H1 (cell line): ENCODE measurements at regions of chr6 and their contacts with region 1.

Region 1: GRCh38 chr6:408599-409102 is 17.1 kb downstream of the IRF4 start:
- DNase-seq: no peak
- H3K4me3 ChIP-seq: no peak overlapping the region
- H3K27ac ChIP-seq: no peak overlapping the region
- H3K4me1 ChIP-seq: peaks cover 0 to 4% (median 0%) of the 10 kb centered on the region in 4 experiments; a peak in 1 of 7 replicates
- H3K27me3 ChIP-seq: no peaks in the 10 kb centered on the region
- CTCF ChIP-seq: peak; percentile 51 to 62 (median 53)
- EP300 ChIP-seq: no peak
- POLR2A ChIP-seq: no peak
- RAD21 ChIP-seq: peak in 1 of 2 experiments; percentile 53

Region 2: GRCh38 chr6:227074-227782 is 181.4 kb before region 1 on chr6:
- CTCF ChIA-PET with region 1: interaction called, 10 read pairs
- POLR2A ChIA-PET with region 1: no interaction called
- DNase-seq: no peak
- H3K4me3 ChIP-seq: no peak overlapping the region
- H3K27ac ChIP-seq: no peak overlapping the region
- H3K4me1 ChIP-seq: peaks cover 0 to 5% (median 3%) of the 10 kb centered on the region in 4 experiments; a peak in 5 of 7 replicates
- H3K27me3 ChIP-seq: no peaks in the 10 kb centered on the region
- CTCF ChIP-seq: no peak
- EP300 ChIP-seq: no peak
- POLR2A ChIP-seq: no peak
- RAD21 ChIP-seq: peak; percentile 21 to 44; a peak in 3 of 4 replicates

Region 3: GRCh38 chr6:391559-392440 is 16.9 kb before region 1 on chr6 and contains the start of gene IRF4:
- CTCF ChIA-PET with region 1: interaction called, 24 read pairs
- POLR2A ChIA-PET with region 1: no interaction called
- DNase-seq: peak in 1 of 2 experiments; percentile 84
- H3K4me3 ChIP-seq: peak within 1 kb of the TSS; percentile 42 to 65 (median 46)
- H3K27ac ChIP-seq: no peak within 1 kb of the TSS
- H3K4me1 ChIP-seq: peaks cover 2 to 6% (median 4%) of the 10 kb centered on the region in 4 experiments; a peak in 4 of 7 replicates
- H3K27me3 ChIP-seq: peaks cover 28 to 67% (median 58%) of the 10 kb centered on the region in 4 experiments
- CTCF ChIP-seq: no peak
- EP300 ChIP-seq: no peak
- POLR2A ChIP-seq: peak in 1 of 2 experiments; percentile 43; a peak in 1 of 3 replicates
- RAD21 ChIP-seq: 0 out of 4 replicates have a peak, but pooled peaks of 1 of the 2 experiments have one; percentile 0
- total RNA-seq, gene IRF4: 2.1 and 4.2 TPM in 2 replicates

Region 4: GRCh38 chr6:398558-399078 is 10.0 kb before region 1 on chr6:
- CTCF ChIA-PET with region 1: interaction called, 24 read pairs
- POLR2A ChIA-PET with region 1: no interaction called
- DNase-seq: no peak
- H3K4me3 ChIP-seq: no peak overlapping the region
- H3K27ac ChIP-seq: no peak overlapping the region
- H3K4me1 ChIP-seq: peaks cover 0 to 6% (median 2%) of the 10 kb centered on the region in 4 experiments; a peak in 2 of 7 replicates
- H3K27me3 ChIP-seq: peaks cover 13 to 22% (median 16%) of the 10 kb centered on the region in 4 experiments
- CTCF ChIP-seq: no peak
- EP300 ChIP-seq: no peak
- POLR2A ChIP-seq: no peak
- RAD21 ChIP-seq: no peak

Region 5: DNA sequence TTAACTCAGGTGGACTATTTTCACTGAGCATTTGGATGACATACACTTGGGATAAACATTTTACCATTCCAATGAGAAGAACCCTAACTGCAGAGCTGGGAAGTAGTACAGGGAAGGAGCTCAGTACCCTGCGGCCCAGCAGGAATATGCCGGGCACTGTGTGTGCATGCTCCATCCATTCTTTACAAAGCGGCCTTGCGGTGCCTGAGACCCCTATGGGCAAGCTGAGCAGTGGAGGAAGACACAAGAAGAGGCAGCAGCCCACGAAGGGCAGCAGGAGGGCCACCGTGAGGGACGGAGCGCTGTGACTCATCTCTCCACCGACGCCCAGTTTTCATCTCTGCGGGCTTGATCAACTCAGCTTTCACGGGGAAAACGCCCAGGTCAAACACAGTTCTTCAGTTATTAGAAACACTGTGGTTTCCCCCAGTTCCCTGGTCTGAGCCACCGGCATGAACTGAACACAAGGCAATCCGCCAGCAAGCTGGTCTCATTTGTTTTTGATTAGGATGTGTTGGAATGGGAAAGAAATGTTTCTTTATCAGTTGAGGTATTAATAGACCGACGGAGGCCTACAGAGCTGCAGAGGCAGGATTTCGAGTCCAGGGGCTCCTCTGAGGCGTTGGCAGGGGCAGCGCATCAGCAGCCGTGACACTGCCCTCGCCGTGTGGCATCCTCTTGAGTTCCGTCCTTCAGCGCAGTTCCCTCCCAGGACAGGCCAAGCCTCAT is 27.8 kb after region 1 on chr6:
- CTCF ChIA-PET with region 1: interaction called, 14 read pairs
- POLR2A ChIA-PET with region 1: no interaction called
- DNase-seq: no peak
- H3K4me3 ChIP-seq: no peak overlapping the region
- H3K27ac ChIP-seq: no peak overlapping the region
- H3K4me1 ChIP-seq: no peaks in the 10 kb centered on the region
- H3K27me3 ChIP-seq: peaks cover 0 to 2% (median 0%) of the 10 kb centered on the region in 4 experiments; a peak in 1 of 7 replicates
- CTCF ChIP-seq: no peak
- EP300 ChIP-seq: no peak
- POLR2A ChIP-seq: no peak
- RAD21 ChIP-seq: no peak